Naive thymus-derived CD4-positive, alpha-beta T cell (primary cell): ENCODE measurements at regions of chr9 and their contacts with region 1.

Region 1: DNA sequence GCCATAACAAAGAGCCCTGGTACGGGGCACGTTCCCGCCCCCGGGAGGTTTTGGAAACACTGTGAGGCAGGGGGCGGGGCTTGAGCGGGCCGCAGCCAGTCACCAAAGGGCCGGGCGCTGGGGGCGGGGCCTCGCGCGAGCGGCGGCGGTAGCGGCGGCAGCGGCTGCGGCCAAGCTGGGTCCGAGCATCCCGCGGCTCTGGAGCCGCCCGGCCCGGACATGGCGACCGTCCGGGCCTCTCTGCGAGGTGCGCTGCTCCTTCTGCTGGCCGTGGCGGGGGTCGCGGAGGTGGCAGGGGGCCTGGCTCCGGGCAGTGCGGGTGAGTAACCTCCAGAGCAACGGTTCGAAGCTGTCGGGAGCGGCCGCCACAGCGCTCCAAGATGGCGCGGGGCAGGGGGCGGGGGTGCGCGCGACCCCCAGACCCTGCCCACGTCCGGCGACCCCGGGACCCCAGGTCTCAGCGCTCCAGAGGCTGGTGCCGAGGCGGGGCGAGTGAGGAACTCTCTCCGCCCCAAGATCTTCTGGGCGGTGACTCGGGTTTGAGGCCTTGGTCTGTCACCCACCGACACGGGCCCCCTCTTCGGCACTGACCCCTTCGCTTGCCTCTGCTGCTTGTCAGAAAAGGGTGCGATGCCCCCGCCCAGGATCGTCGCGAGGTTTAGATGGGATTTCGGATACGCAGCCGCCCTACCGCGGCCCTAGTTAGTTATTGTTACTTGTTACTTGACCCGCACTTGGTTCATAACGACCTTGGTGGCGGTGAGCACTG is at the start of gene RECK:
- DNase-seq: peak; percentile 70 to 95 (median 80)
- ATAC-seq: peak; percentile 98
- H3K4me3 ChIP-seq: peak within 1 kb of the TSS; percentile 69
- H3K4me3 Mint-ChIP-seq: peak within 1 kb of the TSS; percentile 86 to 98 (median 92)
- H3K27ac ChIP-seq: peak within 1 kb of the TSS; percentile 72
- H3K27ac Mint-ChIP-seq: peak within 1 kb of the TSS; percentile 55 to 90 (median 81)
- H3K4me1 ChIP-seq: peaks cover 0 to 31% of the 10 kb centered on the region in 2 donors
- H3K4me1 Mint-ChIP-seq: peaks cover 27 to 50% (median 46%) of the 10 kb centered on the region in 7 donors
- H3K27me3 ChIP-seq: no peaks in the 10 kb centered on the region
- H3K27me3 Mint-ChIP-seq: peaks cover 0 to 21% (median 0%) of the 10 kb centered on the region in 5 donors
- total RNA-seq, gene RECK: 7.4 to 16.7 (median 13.3) TPM

Region 2: GRCh38 chr9:35748858-35749514 is 288.0 kb before region 1 on chr9 and contains the starts of genes GBA2 and RGP1:
- CTCF ChIA-PET with region 1: no interaction called
- POLR2A ChIA-PET with region 1: no interaction called
- intact Hi-C with region 1: loop called in 1 of 2 experiments (anchors 5 kb)
- DNase-seq: peak; percentile 36 to 82 (median 51)
- ATAC-seq: peak; percentile 84
- H3K4me3 ChIP-seq: peak within 1 kb of the TSS; percentile 84
- H3K4me3 Mint-ChIP-seq: peak within 1 kb of the TSS; percentile 89 to 98 (median 96)
- H3K27ac ChIP-seq: peak within 1 kb of the TSS; percentile 87
- H3K27ac Mint-ChIP-seq: peak within 1 kb of the TSS; percentile 89 to 97 (median 96)
- H3K4me1 ChIP-seq: peaks cover 32 to 33% of the 10 kb centered on the region in 2 donors
- H3K4me1 Mint-ChIP-seq: peaks cover 36 to 66% (median 49%) of the 10 kb centered on the region in 7 donors
- H3K27me3 ChIP-seq: no peaks in the 10 kb centered on the region
- H3K27me3 Mint-ChIP-seq: no peaks in the 10 kb centered on the region
- total RNA-seq, gene GBA2: 22.7 to 55.4 (median 49.9) TPM
- total RNA-seq, gene RGP1: 21.2 to 28.8 (median 23.3) TPM

Region 3: GRCh38 chr9:36092509-36093215 is 55.7 kb after region 1 on chr9:
- CTCF ChIA-PET with region 1: no interaction called
- POLR2A ChIA-PET with region 1: no interaction called
- intact Hi-C with region 1: loop called in 1 of 2 experiments (anchors 2 kb)
- DNase-seq: peak in 8 of 9 donors; percentile 14 to 58 (median 34)
- ATAC-seq: peak; percentile 90
- H3K4me3 ChIP-seq: peak overlapping the region; percentile 1
- H3K4me3 Mint-ChIP-seq: peak overlapping the region; percentile 50 to 83 (median 73)
- H3K27ac ChIP-seq: peak overlapping the region; percentile 38
- H3K27ac Mint-ChIP-seq: peak overlapping the region; percentile 35 to 95 (median 87)
- H3K4me1 ChIP-seq: peaks cover 0 to 5% of the 10 kb centered on the region in 2 donors
- H3K4me1 Mint-ChIP-seq: peaks cover 15 to 21% (median 17%) of the 10 kb centered on the region in 7 donors
- H3K27me3 ChIP-seq: no peaks in the 10 kb centered on the region
- H3K27me3 Mint-ChIP-seq: no peaks in the 10 kb centered on the region

Region 4: DNA sequence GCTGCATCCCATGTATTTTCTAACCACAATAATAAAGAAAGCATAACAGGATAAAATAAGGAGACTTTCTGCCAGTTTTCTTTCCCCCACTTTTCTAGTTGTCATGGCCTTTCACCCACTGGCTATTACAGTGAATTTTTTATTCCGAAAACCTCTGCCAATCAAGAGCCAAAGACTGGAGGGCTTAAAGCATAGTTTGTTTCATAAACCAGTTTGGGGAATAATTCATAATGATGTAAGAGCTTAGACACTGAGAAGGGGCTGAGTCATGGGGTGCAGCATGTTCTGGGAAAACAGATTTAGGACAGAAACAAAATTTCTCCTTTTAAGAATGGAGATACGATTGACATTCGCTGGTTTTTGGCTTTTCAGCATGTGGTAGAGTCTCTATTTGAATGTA is 95.1 kb after region 1 on chr9:
- CTCF ChIA-PET with region 1: no interaction called
- POLR2A ChIA-PET with region 1: no interaction called
- intact Hi-C with region 1: no loop called
- DNase-seq: no peak
- ATAC-seq: no peak
- H3K4me3 ChIP-seq: no peak overlapping the region
- H3K4me3 Mint-ChIP-seq: no peak overlapping the region
- H3K27ac ChIP-seq: no peak overlapping the region
- H3K27ac Mint-ChIP-seq: peak overlapping the region in 1 of 9 donors; percentile 12
- H3K4me1 ChIP-seq: peaks cover 15 to 19% of the 10 kb centered on the region in 2 donors
- H3K4me1 Mint-ChIP-seq: peaks cover 13 to 23% (median 22%) of the 10 kb centered on the region in 7 donors
- H3K27me3 ChIP-seq: no peaks in the 10 kb centered on the region
- H3K27me3 Mint-ChIP-seq: peaks cover 0 to 32% (median 0%) of the 10 kb centered on the region in 5 donors